WTC11 (cell line): ENCODE measurements at regions of chr2 and their contacts with region 1.

Region 1: DNA sequence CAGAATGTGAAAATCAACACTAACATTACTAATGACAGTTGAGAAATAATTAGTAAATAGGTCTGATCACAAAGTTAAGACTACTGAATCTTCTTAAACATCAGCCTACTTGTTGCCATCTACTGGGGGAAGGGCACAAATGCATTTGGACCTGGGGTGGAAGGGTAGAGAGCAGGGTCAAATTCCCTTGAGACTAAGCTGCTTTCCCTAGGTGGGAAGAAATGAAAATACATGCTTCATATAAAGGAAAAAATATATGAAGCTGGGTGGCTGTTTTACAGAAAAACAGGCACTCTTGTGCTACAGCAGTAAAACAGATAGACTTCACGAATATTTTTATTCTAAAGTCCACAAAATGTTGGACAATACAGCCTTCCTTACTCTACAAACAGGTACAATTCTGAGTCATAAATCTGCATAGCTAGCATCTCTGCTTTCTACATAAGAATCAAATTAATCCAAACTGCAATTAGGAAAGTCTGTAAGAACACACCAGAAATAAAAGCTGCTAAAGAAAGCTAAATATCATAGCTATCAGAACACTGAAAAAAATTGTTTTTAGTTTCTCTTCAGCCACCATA is 10.9 kb downstream of the TRIP12 start:
- DNase-seq: no peak
- ATAC-seq: peak; percentile 90
- H3K4me3 Mint-ChIP-seq: no peak overlapping the region
- H3K27ac Mint-ChIP-seq: peak overlapping the region; percentile 47; the same call in 1 of the 2 replicates
- H3K4me1 Mint-ChIP-seq: peaks cover 35% of the 10 kb centered on the region
- H3K27me3 Mint-ChIP-seq: no peaks in the 10 kb centered on the region
- CTCF ChIP-seq: 0 out of 2 replicates have a peak, but pooled peaks have one; percentile 6

Region 2: DNA sequence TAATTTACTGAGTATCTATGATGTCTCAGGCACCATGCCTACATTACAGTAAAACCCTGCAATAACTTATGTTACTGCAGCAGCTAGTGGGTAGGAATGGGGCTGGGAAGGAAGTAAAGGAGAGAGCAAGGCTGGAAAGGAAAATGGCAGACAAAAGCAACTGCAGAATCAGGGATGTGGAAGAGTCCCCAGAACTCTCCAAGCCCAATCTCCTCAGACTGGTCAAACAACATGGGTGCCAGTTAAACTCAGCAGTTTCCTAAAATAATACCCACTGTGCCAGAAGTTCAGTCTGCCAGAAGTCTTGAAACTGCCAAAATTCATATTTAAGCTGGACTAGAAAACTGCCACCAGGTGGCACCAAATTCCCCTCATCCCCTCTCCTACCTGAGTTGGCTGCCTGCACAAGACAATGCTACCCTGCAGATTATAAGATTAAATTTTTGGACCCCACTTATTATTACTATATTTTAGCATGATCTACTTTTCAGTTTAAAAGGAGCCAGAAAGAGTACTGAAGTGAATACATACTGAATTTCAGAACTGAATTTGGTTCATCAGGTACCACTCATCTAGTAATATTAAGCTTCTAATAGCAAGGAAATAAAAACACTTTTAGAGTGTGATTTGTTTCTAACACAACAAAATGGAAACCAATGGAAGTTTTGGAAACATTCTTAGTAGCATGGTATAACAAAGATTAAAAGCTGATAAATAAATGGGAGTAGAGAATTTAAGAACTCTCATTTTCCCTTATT is 109.7 kb before region 1 on chr2:
- CTCF ChIA-PET with region 1: interaction called, 18 read pairs
- POLR2A ChIA-PET with region 1: no interaction called
- DNase-seq: peak; percentile 57
- ATAC-seq: peak; percentile 67; the same call in 1 of the 2 replicates
- H3K4me3 Mint-ChIP-seq: no peak overlapping the region
- H3K27ac Mint-ChIP-seq: no peak overlapping the region
- H3K4me1 Mint-ChIP-seq: peaks cover 6% of the 10 kb centered on the region
- H3K27me3 Mint-ChIP-seq: no peaks in the 10 kb centered on the region
- CTCF ChIP-seq: peak; percentile 59

Region 3: DNA sequence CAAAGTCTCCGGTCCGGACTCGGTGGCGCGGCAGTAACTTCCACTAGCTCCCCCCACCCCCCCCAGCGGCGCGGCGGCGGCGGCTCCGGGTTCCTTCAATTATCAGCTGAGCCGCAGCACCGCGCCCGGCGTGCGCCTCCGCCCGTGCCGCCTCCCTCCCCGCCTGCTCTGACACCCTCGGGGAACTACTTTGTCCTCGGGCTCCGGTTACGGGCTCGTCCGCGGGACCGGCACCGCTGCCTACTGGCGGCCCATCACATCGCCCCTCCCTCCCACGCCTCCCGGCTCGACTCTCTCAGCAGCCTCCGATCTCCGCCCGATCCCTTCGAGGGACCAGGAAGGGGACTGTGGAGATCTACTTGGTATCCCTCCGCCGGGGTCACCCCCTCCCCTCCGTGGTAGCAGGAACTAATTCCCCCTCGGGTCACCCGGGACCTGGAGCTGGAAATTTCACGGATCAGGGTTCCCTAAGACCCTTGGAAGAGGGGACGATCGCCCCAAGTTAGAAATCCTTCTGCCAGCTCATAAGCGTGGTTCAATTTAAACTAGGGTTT is 11.0 kb after region 1 on chr2 and contains the start of gene TRIP12:
- CTCF ChIA-PET with region 1: interaction called, 10 read pairs
- POLR2A ChIA-PET with region 1: no interaction called
- DNase-seq: peak; percentile 90
- ATAC-seq: peak; percentile 90
- H3K4me3 Mint-ChIP-seq: peak within 1 kb of the TSS; percentile 97
- H3K27ac Mint-ChIP-seq: peak within 1 kb of the TSS; percentile 96
- H3K4me1 Mint-ChIP-seq: peaks cover 11% of the 10 kb centered on the region
- H3K27me3 Mint-ChIP-seq: no peaks in the 10 kb centered on the region
- CTCF ChIP-seq: no peak
- total RNA-seq, gene TRIP12: 146 to 152 TPM (median 149 TPM) in 3 replicates